HEK293T (cell line): ENCODE measurements at regions of chr17 and their contacts with region 1.

Region 1: GRCh38 chr17:40417609-40418427 is at the start of gene TOP2A:
- DNase-seq: peak; percentile 92

Region 2: DNA sequence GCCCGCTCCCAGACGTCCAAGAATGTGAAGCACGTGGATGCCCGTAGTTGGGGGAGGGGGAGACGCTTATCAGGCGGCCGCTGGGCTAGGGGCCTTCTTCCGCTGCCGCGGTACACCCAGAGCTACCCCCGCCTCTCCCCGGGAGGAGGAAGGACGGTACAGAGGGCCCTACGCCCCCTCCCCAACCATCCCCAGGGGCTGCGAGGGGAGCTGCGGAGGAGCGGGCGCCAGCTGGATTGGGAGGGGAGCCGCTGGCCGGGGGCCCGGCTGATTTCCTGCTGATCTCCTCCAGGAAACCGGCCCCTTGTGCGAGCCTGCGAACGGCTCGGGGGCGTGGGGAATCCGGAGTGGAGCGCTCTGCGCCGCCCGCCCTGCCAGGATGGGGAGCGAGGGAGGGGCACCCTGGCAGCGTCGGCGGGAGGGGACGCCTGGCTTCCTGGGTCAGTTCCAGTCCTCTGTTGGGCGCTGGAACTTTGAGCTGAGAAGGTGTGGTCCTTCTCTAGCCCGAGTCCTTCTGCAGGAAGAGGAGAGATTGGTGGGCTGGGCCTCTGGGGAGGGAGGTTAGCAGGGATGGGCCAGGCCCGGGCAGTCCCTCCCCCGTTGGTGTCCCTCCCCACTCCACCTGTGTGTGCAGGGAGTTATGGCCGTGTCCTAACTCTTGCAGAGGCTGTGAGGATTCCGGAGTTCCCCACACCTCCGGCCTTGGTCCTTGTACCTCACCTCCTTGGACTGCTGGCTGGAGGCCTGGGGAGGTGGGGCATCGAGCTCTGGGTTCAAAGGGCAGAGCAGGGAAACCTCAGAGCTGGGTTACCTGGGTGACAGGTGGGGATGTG is 72.4 kb before region 1 on chr17:
- CTCF ChIA-PET with region 1: no interaction called
- POLR2A ChIA-PET with region 1: no interaction called
- DNase-seq: no peak

Region 3: GRCh38 chr17:40362696-40363110 is 55.1 kb before region 1 on chr17:
- CTCF ChIA-PET with region 1: interaction called, 5 read pairs
- POLR2A ChIA-PET with region 1: interaction called, 20 read pairs
- DNase-seq: peak; percentile 79

Region 4: DNA sequence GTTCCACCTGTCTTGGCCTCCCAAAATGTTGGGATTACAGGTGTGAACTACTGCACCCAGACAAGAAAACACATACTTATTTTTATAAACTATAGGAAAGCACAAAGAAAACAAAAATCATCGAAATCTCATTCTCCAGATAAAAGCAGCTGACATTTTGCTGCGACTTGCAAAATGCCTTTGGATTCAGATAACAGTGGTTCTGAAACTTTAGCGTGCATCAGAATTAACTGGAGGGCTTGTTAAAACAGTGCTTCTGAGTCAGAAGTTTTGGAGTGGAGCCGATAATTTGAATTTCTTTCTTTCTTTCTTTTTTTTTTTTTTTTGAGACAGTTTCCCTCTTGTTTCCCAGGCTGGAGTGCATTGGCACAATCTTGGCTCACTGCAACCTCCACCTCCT is 35.6 kb before region 1 on chr17:
- CTCF ChIA-PET with region 1: no interaction called
- POLR2A ChIA-PET with region 1: interaction called, 10 read pairs
- DNase-seq: no peak

Region 5: DNA sequence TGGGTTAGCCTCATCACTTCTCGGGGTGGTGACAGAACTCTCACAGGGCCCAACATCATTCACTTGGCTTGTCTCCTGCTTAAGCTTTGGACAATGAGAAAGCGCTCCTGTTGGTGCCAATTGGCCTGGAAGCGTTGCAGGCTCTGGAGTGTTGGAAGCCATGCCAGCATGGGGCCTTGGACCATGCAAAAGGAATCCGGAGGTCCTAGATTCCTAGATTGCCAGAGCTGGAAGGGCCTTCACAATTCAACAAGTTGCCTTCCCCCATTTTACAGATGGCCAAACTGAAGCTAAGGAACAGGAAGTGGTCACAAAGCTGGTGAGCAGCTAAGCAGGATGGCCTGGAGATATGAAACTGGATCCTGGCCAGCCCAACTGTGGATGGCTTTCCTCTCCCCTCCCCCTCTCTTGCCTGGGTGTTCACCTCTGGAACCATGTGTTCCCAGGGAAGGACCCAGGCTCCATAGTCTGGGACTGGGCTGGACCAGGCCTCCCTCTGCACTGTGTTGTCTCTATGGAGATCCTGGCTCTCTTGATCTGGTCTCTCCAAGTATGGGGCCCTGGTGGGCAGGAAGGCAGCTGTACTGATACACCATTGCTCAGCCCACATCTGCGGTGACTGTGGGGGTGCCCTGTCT is 19.4 kb after region 1 on chr17:
- CTCF ChIA-PET with region 1: interaction called, 4 read pairs
- POLR2A ChIA-PET with region 1: interaction called, 10 read pairs
- DNase-seq: no peak

Region 6: DNA sequence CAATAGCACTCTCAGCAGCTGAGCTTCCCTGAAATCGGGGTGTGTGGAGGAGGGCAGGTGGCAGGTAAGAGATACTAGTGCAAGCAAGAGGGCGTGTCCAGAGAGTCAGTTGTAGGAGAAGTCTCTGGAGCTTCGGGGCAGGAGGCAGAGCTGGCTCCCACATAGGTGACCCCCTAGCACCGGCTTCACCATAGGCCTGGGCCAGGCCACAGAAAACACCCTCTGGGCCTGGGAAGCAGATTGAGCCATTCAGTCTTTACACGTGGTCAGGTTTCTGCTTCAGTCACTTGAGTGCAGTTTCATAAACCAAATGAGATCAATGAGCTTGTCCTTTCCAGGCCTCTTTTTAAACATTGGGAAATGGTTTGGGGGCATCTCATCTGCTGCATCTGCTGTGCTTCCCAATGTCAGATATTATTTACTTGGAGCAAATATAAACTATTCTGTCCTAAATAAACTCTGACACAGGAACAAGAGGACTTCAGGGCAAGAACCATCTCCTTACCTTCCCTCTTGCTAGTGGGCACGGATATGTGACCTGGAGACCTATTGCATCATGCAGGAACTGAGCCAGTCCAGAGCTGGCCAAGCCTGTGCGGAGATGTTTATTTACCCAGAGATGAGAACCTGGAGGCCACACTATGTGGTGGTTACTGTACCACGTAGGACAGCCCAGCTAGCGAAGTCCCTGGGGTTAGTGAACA is 131.3 kb after region 1 on chr17:
- CTCF ChIA-PET with region 1: interaction called, 3 read pairs
- POLR2A ChIA-PET with region 1: interaction called, 10 read pairs
- DNase-seq: no peak